ENCODE measurements at regions of chr9 and their contacts with region 1.

Region 1: DNA sequence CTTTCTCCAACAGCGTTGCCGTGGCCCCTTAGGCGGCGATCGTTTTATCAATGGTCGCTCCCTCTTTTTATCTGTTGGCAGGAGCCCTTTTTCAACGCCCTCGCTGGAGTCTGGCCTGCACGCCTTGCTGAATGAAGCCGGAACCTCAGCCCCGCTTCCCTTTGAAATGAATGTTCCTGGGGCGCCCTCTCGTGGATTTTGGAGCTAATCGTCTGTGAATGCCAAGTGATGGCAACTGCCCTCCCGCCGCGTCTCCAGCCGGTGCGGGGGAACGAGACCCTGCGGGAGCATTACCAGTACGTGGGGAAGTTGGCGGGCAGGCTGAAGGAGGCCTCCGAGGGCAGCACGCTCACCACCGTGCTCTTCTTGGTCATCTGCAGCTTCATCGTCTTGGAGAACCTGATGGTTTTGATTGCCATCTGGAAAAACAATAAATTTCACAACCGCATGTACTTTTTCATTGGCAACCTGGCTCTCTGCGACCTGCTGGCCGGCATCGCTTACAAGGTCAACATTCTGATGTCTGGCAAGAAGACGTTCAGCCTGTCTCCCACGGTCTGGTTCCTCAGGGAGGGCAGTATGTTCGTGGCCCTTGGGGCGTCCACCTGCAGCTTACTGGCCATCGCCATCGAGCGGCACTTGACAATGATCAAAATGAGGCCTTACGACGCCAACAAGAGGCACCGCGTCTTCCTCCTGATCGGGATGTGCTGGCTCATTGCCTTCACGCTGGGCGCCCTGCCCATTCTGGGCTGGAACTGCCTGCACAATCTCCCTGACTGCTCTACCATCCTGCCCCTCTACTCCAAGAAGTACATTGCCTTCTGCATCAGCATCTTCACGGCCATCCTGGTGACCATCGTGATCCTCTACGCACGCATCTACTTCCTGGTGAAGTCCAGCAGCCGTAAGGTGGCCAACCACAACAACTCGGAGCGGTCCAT is 10.0 kb downstream of the S1PR3 start:
- DNase-seq: peak; percentile 89 to 90
- H3K4me3 ChIP-seq: peak overlapping the region in 1 of 2 donors; percentile 4
- H3K27ac ChIP-seq: peak overlapping the region in 1 of 2 donors; percentile 28
- H3K4me1 ChIP-seq: peaks cover 5 to 11% of the 10 kb centered on the region in 2 donors
- H3K27me3 ChIP-seq: no peaks in the 10 kb centered on the region
- CTCF ChIP-seq: peak; percentile 70 to 92 (median 82)
- POLR2A ChIP-seq: no peak

Region 2: DNA sequence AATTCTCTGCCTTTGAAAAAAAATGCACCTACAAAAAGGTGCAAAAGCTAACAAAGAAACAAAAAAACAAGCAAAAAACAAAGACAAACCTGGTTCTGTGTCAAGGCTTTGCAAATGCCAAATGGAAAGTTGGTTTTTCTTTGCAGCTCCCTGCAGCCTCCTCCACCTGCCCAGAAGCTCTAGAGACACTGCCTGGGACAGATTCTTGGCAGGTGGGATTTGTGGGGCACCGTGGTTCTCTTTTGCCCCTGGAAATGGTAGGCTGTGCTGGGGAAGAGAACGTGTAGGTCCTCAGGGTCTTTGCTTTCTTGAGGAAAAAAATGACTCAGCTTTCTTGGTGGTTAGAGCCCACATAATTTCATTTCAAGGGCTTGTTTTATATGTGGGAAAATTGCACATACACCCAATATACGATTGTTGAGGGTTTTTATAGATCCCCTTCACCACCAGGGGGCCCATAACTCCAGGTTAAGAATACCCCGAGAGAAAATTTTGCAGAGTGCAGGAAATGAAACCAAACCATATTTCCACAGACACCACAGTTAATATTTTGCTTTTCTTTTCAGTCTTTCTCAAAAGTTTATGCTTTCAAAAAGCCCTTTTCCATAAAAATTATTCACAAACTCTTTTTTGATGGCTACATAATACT is 407.6 kb before region 1 on chr9:
- intact Hi-C with region 1: loop called (anchors 5 kb)
- DNase-seq: peak; percentile 64 to 77
- H3K4me3 ChIP-seq: no peak overlapping the region
- H3K27ac ChIP-seq: no peak overlapping the region
- H3K4me1 ChIP-seq: no peaks in the 10 kb centered on the region
- H3K27me3 ChIP-seq: no peaks in the 10 kb centered on the region
- CTCF ChIP-seq: peak; percentile 68 to 79 (median 76)
- POLR2A ChIP-seq: no peak

Region 3: DNA sequence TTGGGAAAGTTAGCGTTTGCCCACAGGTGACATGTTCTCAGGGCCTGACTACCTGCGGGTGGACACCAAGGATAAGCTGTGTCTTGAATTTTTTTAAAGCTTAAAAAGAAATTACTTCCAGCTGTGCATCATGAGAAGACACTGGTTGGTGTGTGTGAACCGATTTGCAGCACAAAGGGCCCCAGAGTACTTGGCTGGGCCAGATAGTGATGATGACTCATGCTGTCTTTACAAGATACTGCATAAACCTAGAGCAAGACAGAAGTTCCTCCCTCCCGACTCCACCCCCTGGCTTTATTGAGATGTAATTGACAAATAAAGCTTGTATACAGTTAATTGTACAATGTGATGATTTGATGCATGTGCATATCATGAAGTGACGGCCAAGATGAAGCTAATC is 253.5 kb before region 1 on chr9:
- intact Hi-C with region 1: loop called (anchors 5 kb)
- DNase-seq: peak; percentile 57 to 74
- H3K4me3 ChIP-seq: no peak overlapping the region
- H3K27ac ChIP-seq: peak overlapping the region; percentile 50 to 62
- H3K4me1 ChIP-seq: peaks cover 4 to 8% of the 10 kb centered on the region in 2 donors
- H3K27me3 ChIP-seq: no peaks in the 10 kb centered on the region
- CTCF ChIP-seq: no peak
- POLR2A ChIP-seq: no peak

Measured in uterus (tissue), 4 donors.